Psoas muscle (tissue), 8 donors: ENCODE measurements at regions of chr17 and their contacts with region 1.

Region 1: GRCh38 chr17:30093463-30094147 is 23.0 kb upstream of the NSRP1 start:
- DNase-seq: peak in 1 of 2 donors; percentile 14
- ATAC-seq: peak; percentile 63 to 83 (median 71)
- H3K4me3 ChIP-seq: no peak overlapping the region
- H3K27ac ChIP-seq: no peak overlapping the region
- H3K4me1 ChIP-seq: peaks cover 9% of the 10 kb centered on the region
- H3K27me3 ChIP-seq: no peaks in the 10 kb centered on the region
- CTCF ChIP-seq: peak; percentile 82

Region 2: GRCh38 chr17:29579866-29580771 is 513.5 kb before region 1 on chr17:
- intact Hi-C with region 1: loop called in 1 of 2 experiments (anchors 2 kb)
- DNase-seq: peak; percentile 88 to 95
- ATAC-seq: peak; percentile 88 to 94 (median 90)
- H3K4me3 ChIP-seq: no peak overlapping the region
- H3K27ac ChIP-seq: peak overlapping the region; percentile 42
- H3K4me1 ChIP-seq: peaks cover 27% of the 10 kb centered on the region
- H3K27me3 ChIP-seq: no peaks in the 10 kb centered on the region
- CTCF ChIP-seq: peak; percentile 90

Region 3: GRCh38 chr17:29807520-29808351 is 285.9 kb before region 1 on chr17:
- intact Hi-C with region 1: loop called in 1 of 2 experiments (anchors 10 kb)
- DNase-seq: peak; percentile 42 to 56
- ATAC-seq: peak; percentile 73 to 87 (median 76)
- H3K4me3 ChIP-seq: no peak overlapping the region
- H3K27ac ChIP-seq: no peak overlapping the region
- H3K4me1 ChIP-seq: no peaks in the 10 kb centered on the region
- H3K27me3 ChIP-seq: no peaks in the 10 kb centered on the region
- CTCF ChIP-seq: peak; percentile 80

Region 4: GRCh38 chr17:30021708-30022317 is 71.8 kb before region 1 on chr17:
- intact Hi-C with region 1: loop called in 1 of 2 experiments (anchors 5 kb)
- DNase-seq: no peak
- ATAC-seq: peak in 2 of 4 donors; percentile 54 to 55
- H3K4me3 ChIP-seq: no peak overlapping the region
- H3K27ac ChIP-seq: no peak overlapping the region
- H3K4me1 ChIP-seq: no peaks in the 10 kb centered on the region
- H3K27me3 ChIP-seq: no peaks in the 10 kb centered on the region
- CTCF ChIP-seq: peak; percentile 75

Region 5: GRCh38 chr17:30062372-30062771 is 31.2 kb before region 1 on chr17:
- intact Hi-C with region 1: no loop called
- DNase-seq: no peak
- ATAC-seq: no peak
- H3K4me3 ChIP-seq: no peak overlapping the region
- H3K27ac ChIP-seq: no peak overlapping the region
- H3K4me1 ChIP-seq: no peaks in the 10 kb centered on the region
- H3K27me3 ChIP-seq: no peaks in the 10 kb centered on the region
- CTCF ChIP-seq: no peak